Posterior cingulate gyrus (tissue), 11 donors: ENCODE measurements at regions of chr19 and their contacts with region 1.

Region 1: DNA sequence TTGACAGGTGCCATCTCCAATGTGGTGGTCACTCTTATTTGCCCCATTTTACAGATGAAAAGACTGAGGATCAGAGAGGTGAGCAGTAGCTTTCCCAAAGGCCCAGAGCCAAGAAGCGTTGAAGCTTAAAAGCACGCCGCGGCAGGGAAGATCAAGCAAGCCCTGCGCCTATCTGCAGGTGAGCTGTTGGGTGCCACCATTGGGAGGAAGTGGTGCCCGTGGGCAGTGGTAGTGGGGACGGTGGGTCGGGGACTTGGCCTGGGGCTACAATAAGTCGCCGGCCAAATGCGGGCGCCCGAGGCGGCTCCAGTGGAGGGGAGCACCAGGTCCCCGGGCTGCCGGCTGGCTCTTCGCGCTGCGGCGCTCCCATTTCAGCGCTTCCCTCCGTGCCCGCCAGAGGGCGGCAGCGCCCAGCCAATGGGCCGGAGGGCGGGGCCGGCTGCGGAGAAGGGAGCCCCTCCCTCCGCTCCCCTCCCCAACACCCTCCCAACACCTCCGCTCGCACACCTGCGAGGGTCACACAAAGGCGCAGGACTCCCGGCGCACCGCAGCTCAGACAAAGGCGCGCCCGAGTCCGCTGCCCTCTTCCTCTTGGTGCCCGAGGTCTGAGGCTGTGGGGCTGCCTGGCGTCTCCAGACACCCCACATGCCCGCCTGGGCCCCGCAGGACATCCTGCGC is 744 bp upstream of the POU2F2 start:
- DNase-seq: peak; percentile 59 to 97 (median 78)

Region 2: GRCh38 chr19:42176990-42177685 is 44.1 kb after region 1 on chr19:
- intact Hi-C with region 1: loop called (anchors 2 kb)
- DNase-seq: peak; percentile 62 to 97 (median 84)

Region 3: DNA sequence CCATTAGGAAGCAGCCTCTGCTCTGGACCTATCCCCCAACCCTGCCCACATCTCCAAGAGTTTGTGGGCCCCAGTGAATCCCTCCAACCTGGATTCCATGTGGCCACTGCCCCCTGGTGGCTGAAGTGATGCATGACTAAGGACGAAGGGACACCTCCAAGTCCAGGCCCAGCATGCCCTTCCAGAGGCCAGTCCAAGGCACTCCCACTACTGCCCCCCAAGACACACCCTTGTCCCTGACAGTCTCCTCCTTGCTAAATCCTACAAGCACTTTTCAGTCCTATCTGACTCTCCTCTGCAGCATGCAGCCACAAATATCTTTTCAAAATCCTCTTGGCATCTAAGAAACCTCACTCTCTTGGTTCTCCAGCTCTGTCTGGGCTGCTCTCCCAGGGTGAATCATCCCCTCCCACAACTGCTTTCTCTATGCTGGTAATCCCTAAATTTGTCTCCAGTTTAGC is 51.4 kb after region 1 on chr19:
- intact Hi-C with region 1: loop called (anchors 1 kb)
- DNase-seq: peak; percentile 67 to 97 (median 86)